KBM-7 (cell line): ENCODE measurements at regions of chr16 and their contacts with region 1.

Region 1: DNA sequence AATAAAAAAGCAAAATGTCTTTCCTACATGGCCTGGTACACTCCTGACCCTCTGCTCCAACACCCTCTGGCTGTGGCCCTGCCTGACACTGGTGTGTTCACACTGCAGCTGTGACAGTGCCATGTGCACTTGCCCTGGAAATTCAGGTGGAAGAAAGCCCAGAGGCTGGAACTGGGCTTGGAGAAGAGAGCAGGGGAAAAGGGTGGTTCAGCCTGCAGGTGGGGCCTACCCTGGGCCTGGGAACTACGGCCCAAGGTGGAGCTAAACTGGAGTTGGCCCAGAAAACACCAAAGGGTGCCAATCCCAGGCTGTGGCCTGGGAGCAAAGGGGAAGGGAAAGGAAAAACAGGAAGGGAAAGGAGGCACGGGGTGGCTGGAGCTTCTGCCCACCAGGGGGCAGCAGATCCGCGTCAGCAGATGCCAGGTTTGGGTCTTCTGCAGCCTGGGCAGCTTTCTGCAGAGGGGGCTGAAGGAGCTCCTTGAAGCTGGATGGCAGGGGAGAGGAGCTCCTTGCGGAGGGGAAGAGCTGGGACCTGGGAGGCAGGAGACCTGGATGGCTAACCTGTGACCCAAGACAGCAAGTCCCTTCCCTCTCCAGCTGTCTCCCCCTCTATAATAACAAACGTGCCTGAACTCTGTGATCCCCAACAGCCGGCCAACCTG is 15.4 kb upstream of the CTCF start:
- DNase-seq: peak; percentile 92

Region 2: GRCh38 chr16:67659648-67660563 is 113.0 kb after region 1 on chr16 and contains the start of gene ACD:
- in situ Hi-C with region 1: loop called (anchors 10 kb)
- DNase-seq: peak; percentile 92

Region 3: GRCh38 chr16:67993189-67994039 is 446.5 kb after region 1 on chr16:
- in situ Hi-C with region 1: no loop called
- DNase-seq: peak; percentile 93